CD8-positive, alpha-beta T cell (primary cell): ENCODE measurements at regions of chr6 and their contacts with region 1.

Region 1: GRCh38 chr6:143842902-143843676 is at the start of gene LTV1:
- DNase-seq: peak; percentile 82 to 96 (median 91)
- ATAC-seq: peak; percentile 96
- H3K4me3 ChIP-seq: peak within 1 kb of the TSS; percentile 96 to 99
- H3K4me3 Mint-ChIP-seq: peak within 1 kb of the TSS; percentile 96
- H3K27ac ChIP-seq: peak within 1 kb of the TSS; percentile 94 to 95
- H3K27ac Mint-ChIP-seq: peak within 1 kb of the TSS; percentile 98
- H3K4me1 ChIP-seq: peaks cover 6% of the 10 kb centered on the region
- H3K4me1 Mint-ChIP-seq: peaks cover 28% of the 10 kb centered on the region
- H3K27me3 ChIP-seq: no peaks in the 10 kb centered on the region
- H3K27me3 Mint-ChIP-seq: no peaks in the 10 kb centered on the region
- CTCF ChIP-seq: no peak
- total RNA-seq, gene LTV1: 31.7 to 33.4 TPM

Region 2: GRCh38 chr6:143450453-143451371 is 392.4 kb before region 1 on chr6 and contains the starts of genes ADAT2 and PEX3:
- CTCF ChIA-PET with region 1: no interaction called
- POLR2A ChIA-PET with region 1: interaction called, 9 read pairs
- intact Hi-C with region 1: loop called (anchors 1 to 2 kb)
- DNase-seq: peak; percentile 82 to 95 (median 92)
- ATAC-seq: peak; percentile 90
- H3K4me3 ChIP-seq: peak within 1 kb of the TSS; percentile 64 to 86
- H3K4me3 Mint-ChIP-seq: peak within 1 kb of the TSS; percentile 100
- H3K27ac ChIP-seq: peak within 1 kb of the TSS; percentile 68 to 74
- H3K27ac Mint-ChIP-seq: peak within 1 kb of the TSS; percentile 96
- H3K4me1 ChIP-seq: peaks cover 21% of the 10 kb centered on the region
- H3K4me1 Mint-ChIP-seq: peaks cover 57% of the 10 kb centered on the region
- H3K27me3 ChIP-seq: no peaks in the 10 kb centered on the region
- H3K27me3 Mint-ChIP-seq: no peaks in the 10 kb centered on the region
- CTCF ChIP-seq: no peak
- total RNA-seq, gene ADAT2: 18.8 to 19.9 TPM
- total RNA-seq, gene PEX3: 10.5 to 11.6 TPM

Region 3: DNA sequence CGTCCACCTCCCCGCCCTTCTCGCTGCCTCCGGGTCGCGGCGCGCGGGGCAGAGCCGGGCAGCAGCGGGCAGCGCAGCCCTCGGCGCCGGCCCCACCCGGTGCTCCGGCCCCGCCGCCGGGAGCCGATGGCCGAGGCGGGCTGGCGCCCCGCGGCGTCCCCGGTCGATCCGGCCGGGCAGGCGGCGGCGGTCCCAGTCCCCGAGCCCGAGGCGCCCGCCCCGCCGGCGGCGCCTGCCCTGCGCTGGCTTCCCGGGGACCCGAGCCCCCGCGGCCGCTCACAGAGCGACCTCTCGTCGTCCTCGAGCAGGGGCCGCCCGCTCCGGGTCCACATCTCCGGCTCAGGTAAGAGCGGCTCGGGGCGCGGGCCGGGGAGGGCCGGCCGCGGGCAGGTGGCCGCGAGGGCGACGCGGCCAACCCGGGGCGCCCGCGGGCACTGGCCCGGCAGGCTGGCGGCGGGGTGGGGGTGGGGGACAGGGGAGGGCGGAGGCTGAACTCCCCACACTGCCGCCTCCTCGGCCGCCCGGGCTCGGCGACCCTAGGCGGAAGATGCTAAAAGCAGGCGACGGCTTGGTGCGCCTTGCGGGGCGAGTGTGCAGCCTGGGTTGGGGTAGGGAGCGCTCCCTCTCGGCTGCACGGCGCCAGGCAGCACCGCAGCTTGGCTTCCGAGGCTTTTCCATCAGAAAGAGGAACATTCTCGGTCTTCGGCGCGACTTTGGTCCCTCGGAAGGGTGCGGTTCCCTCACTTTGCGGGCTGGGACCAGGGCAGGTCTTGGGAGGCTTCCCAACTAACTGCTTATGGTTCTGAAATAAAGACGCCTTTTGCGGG is 306.0 kb before region 1 on chr6:
- CTCF ChIA-PET with region 1: interaction called, 4 read pairs
- POLR2A ChIA-PET with region 1: interaction called, 4 read pairs
- intact Hi-C with region 1: loop called in 1 of 2 experiments (anchors 10 kb)
- DNase-seq: peak; percentile 25 to 79 (median 57)
- ATAC-seq: peak; percentile 75
- H3K4me3 ChIP-seq: peak overlapping the region; percentile 54 to 73
- H3K4me3 Mint-ChIP-seq: peak overlapping the region; percentile 84
- H3K27ac ChIP-seq: peak overlapping the region in 1 of 2 experiments; percentile 62
- H3K27ac Mint-ChIP-seq: peak overlapping the region; percentile 90
- H3K4me1 ChIP-seq: peaks cover 5% of the 10 kb centered on the region
- H3K4me1 Mint-ChIP-seq: peaks cover 36% of the 10 kb centered on the region
- H3K27me3 ChIP-seq: no peaks in the 10 kb centered on the region
- H3K27me3 Mint-ChIP-seq: no peaks in the 10 kb centered on the region
- CTCF ChIP-seq: peak; percentile 53

Region 4: GRCh38 chr6:143575440-143575839 is 267.6 kb before region 1 on chr6:
- CTCF ChIA-PET with region 1: interaction called, 4 read pairs
- POLR2A ChIA-PET with region 1: interaction called, 3 read pairs
- intact Hi-C with region 1: loop called (anchors 5 to 10 kb)
- DNase-seq: peak; percentile 12 to 81 (median 46)
- ATAC-seq: peak; percentile 99
- H3K4me3 ChIP-seq: no peak overlapping the region
- H3K4me3 Mint-ChIP-seq: no peak overlapping the region
- H3K27ac ChIP-seq: no peak overlapping the region
- H3K27ac Mint-ChIP-seq: no peak overlapping the region
- H3K4me1 ChIP-seq: no peaks in the 10 kb centered on the region
- H3K4me1 Mint-ChIP-seq: no peaks in the 10 kb centered on the region
- H3K27me3 ChIP-seq: no peaks in the 10 kb centered on the region
- H3K27me3 Mint-ChIP-seq: no peaks in the 10 kb centered on the region
- CTCF ChIP-seq: peak; percentile 93

Region 5: GRCh38 chr6:143912671-143913070 is 69.6 kb after region 1 on chr6:
- CTCF ChIA-PET with region 1: no interaction called
- POLR2A ChIA-PET with region 1: no interaction called
- intact Hi-C with region 1: no loop called
- DNase-seq: no peak
- ATAC-seq: no peak
- H3K4me3 ChIP-seq: no peak overlapping the region
- H3K4me3 Mint-ChIP-seq: no peak overlapping the region
- H3K27ac ChIP-seq: no peak overlapping the region
- H3K27ac Mint-ChIP-seq: no peak overlapping the region
- H3K4me1 ChIP-seq: no peaks in the 10 kb centered on the region
- H3K4me1 Mint-ChIP-seq: no peaks in the 10 kb centered on the region
- H3K27me3 ChIP-seq: no peaks in the 10 kb centered on the region
- H3K27me3 Mint-ChIP-seq: no peaks in the 10 kb centered on the region
- CTCF ChIP-seq: no peak

Region 6: GRCh38 chr6:144158133-144158532 is 315.0 kb after region 1 on chr6:
- CTCF ChIA-PET with region 1: no interaction called
- POLR2A ChIA-PET with region 1: no interaction called
- intact Hi-C with region 1: loop called in 1 of 2 experiments (anchors 5 kb)
- DNase-seq: no peak
- ATAC-seq: no peak
- H3K4me3 ChIP-seq: no peak overlapping the region
- H3K4me3 Mint-ChIP-seq: no peak overlapping the region
- H3K27ac ChIP-seq: no peak overlapping the region
- H3K27ac Mint-ChIP-seq: no peak overlapping the region
- H3K4me1 ChIP-seq: no peaks in the 10 kb centered on the region
- H3K4me1 Mint-ChIP-seq: peaks cover 5% of the 10 kb centered on the region
- H3K27me3 ChIP-seq: no peaks in the 10 kb centered on the region
- H3K27me3 Mint-ChIP-seq: no peaks in the 10 kb centered on the region
- CTCF ChIP-seq: no peak